ENCODE measurements at regions of chr5 and their contacts with region 1.

Region 1: GRCh38 chr5:117454716-117455596 is 880.3 kb upstream of the SEMA6A start:
- DNase-seq: peak; percentile 87
- H3K4me3 Mint-ChIP-seq: peak overlapping the region; percentile 79
- H3K27ac Mint-ChIP-seq: peak overlapping the region; percentile 75
- H3K4me1 Mint-ChIP-seq: peaks cover 9% of the 10 kb centered on the region
- H3K27me3 Mint-ChIP-seq: no peaks in the 10 kb centered on the region
- CTCF ChIP-seq: peak; percentile 90

Region 2: GRCh38 chr5:117539692-117540091 is 84.7 kb after region 1 on chr5:
- CTCF ChIA-PET with region 1: interaction called, 7 read pairs
- intact Hi-C with region 1: loop called (anchors 1 kb)
- DNase-seq: no peak
- H3K4me3 Mint-ChIP-seq: peak overlapping the region; percentile 19
- H3K27ac Mint-ChIP-seq: peak overlapping the region; percentile 63
- H3K4me1 Mint-ChIP-seq: peaks cover 37% of the 10 kb centered on the region
- H3K27me3 Mint-ChIP-seq: no peaks in the 10 kb centered on the region
- CTCF ChIP-seq: no peak

Region 3: GRCh38 chr5:117590944-117591343 is 136.0 kb after region 1 on chr5:
- CTCF ChIA-PET with region 1: interaction called, 10 read pairs
- intact Hi-C with region 1: loop called (anchors 10 kb)
- DNase-seq: peak; percentile 17
- H3K4me3 Mint-ChIP-seq: no peak overlapping the region
- H3K27ac Mint-ChIP-seq: no peak overlapping the region
- H3K4me1 Mint-ChIP-seq: no peaks in the 10 kb centered on the region
- H3K27me3 Mint-ChIP-seq: no peaks in the 10 kb centered on the region
- CTCF ChIP-seq: no peak

Region 4: GRCh38 chr5:117788594-117788993 is 333.6 kb after region 1 on chr5:
- CTCF ChIA-PET with region 1: interaction called, 6 read pairs
- intact Hi-C with region 1: loop called (anchors 2 kb)
- DNase-seq: peak; percentile 35
- H3K4me3 Mint-ChIP-seq: no peak overlapping the region
- H3K27ac Mint-ChIP-seq: no peak overlapping the region
- H3K4me1 Mint-ChIP-seq: peaks cover 11% of the 10 kb centered on the region
- H3K27me3 Mint-ChIP-seq: no peaks in the 10 kb centered on the region
- CTCF ChIP-seq: no peak

Region 5: DNA sequence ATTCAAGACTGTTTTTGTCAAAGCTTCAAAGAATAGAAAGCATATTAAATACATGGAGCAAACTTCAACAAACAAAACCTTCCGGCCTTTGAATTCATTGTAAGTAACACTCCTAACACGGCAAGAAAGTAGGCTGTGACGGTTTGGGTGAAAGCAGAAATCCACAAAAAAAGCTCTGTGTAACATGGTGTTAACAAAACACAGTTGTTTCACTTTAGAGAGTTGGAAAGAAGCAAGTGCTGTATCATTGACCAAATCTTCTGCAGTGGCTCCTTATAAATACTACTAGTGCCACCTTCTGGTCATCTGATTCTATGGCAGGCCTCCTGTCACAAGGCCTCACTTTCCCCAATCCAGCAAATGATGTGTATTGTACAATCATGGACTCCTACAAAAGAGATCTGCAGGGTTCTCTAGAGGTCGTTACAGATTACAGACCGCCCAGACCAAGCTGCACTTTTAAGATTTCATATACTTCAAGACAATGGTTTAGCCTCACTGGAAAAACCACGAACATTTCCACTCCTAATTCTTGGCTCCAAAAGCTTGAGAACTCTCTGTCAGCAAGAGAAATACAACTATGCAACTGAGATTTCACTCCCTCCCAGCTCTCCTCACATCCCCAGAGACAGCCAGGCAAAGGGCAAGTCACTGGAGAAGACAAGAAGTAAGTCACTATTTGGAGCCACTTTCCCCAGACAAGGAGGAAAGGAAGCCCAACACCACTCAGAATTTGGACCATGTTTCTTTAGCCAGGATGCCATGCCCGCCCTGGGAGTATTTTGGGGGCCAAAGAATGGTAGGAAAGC is 1337.2 kb after region 1 on chr5:
- CTCF ChIA-PET with region 1: interaction called, 11 read pairs
- intact Hi-C with region 1: loop called (anchors 1 kb)
- DNase-seq: peak; percentile 41
- H3K4me3 Mint-ChIP-seq: no peak overlapping the region
- H3K27ac Mint-ChIP-seq: no peak overlapping the region
- H3K4me1 Mint-ChIP-seq: no peaks in the 10 kb centered on the region
- H3K27me3 Mint-ChIP-seq: no peaks in the 10 kb centered on the region
- CTCF ChIP-seq: peak; percentile 71